ENCODE measurements at regions of chr16 and their contacts with region 1.

Region 1: GRCh38 chr16:60739737-60740683 is 1296.2 kb downstream of the CDH8 start:
- DNase-seq: no peak
- ATAC-seq: no peak
- H3K4me3 ChIP-seq: no peak overlapping the region
- H3K27ac ChIP-seq: no peak overlapping the region
- H3K4me1 ChIP-seq: no peaks in the 10 kb centered on the region
- H3K27me3 ChIP-seq: no peaks in the 10 kb centered on the region
- CTCF ChIP-seq: no peak

Region 2: GRCh38 chr16:60127196-60127595 is 612.8 kb before region 1 on chr16:
- CTCF ChIA-PET with region 1: interaction called, 14 read pairs
- POLR2A ChIA-PET with region 1: no interaction called
- in situ Hi-C with region 1: no loop called
- intact Hi-C with region 1: no loop called
- DNase-seq: no peak
- ATAC-seq: no peak
- H3K4me3 ChIP-seq: no peak overlapping the region
- H3K27ac ChIP-seq: no peak overlapping the region
- H3K4me1 ChIP-seq: no peaks in the 10 kb centered on the region
- H3K27me3 ChIP-seq: no peaks in the 10 kb centered on the region
- CTCF ChIP-seq: no peak

Region 3: GRCh38 chr16:60922920-60923319 is 182.9 kb after region 1 on chr16:
- CTCF ChIA-PET with region 1: no interaction called
- POLR2A ChIA-PET with region 1: no interaction called
- in situ Hi-C with region 1: no loop called
- intact Hi-C with region 1: no loop called
- DNase-seq: no peak
- ATAC-seq: no peak
- H3K4me3 ChIP-seq: no peak overlapping the region
- H3K27ac ChIP-seq: no peak overlapping the region
- H3K4me1 ChIP-seq: no peaks in the 10 kb centered on the region
- H3K27me3 ChIP-seq: no peaks in the 10 kb centered on the region
- CTCF ChIP-seq: no peak

Measured in Panc1 (cell line).